Activated B cell treated with CpG ODN at 0.5 μM for 24 hours (primary cell): ENCODE measurements at regions of chr7 and their contacts with region 1.

Region 1: GRCh38 chr7:17234398-17235031 is 63.9 kb upstream of the AHR start:
- DNase-seq: peak; percentile 17
- ATAC-seq: peak; percentile 86
- H3K4me3 Mint-ChIP-seq: peak overlapping the region; percentile 77
- H3K27ac Mint-ChIP-seq: peak overlapping the region; percentile 98
- H3K4me1 Mint-ChIP-seq: peaks cover 29% of the 10 kb centered on the region
- H3K27me3 Mint-ChIP-seq: no peaks in the 10 kb centered on the region
- CTCF ChIP-seq: no peak

Region 2: DNA sequence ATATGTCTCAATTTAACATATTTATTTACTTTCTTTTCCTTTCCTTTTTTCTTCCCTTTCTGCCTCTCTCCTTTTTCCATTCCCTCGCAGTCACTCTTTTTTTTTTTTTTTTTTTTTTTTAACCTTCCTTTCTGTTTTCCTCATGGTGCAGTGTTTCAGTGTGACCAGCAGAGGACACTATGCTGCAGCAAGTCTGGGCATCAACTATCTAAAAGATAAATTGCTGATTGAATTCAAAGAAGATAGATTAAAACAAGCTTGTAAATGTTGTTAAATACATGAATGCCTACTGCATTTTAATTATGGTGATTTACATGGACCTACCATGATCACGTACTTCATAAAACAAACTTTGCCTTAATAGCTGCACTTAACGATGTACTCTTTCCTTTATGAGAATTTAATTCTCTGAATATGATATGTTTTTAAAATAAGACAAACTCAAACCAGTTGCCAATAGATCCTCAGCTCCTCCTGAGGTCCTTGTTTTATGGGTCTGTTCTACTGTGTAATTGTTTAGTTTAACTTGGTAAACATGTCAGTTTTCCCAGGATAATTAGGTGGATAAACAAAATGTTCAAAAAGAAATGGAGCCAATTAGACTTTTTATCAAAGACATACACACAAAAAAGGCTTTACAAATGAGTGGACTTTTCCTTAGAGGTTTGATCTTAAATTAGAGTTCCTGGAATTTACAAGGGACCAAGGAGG is 251.7 kb before region 1 on chr7:
- CTCF ChIA-PET with region 1: no interaction called
- POLR2A ChIA-PET with region 1: no interaction called
- intact Hi-C with region 1: loop called (anchors 1 kb)
- DNase-seq: no peak
- ATAC-seq: peak; percentile 64
- H3K4me3 Mint-ChIP-seq: peak overlapping the region; percentile 30
- H3K27ac Mint-ChIP-seq: peak overlapping the region; percentile 15
- H3K4me1 Mint-ChIP-seq: peaks cover 7% of the 10 kb centered on the region
- H3K27me3 Mint-ChIP-seq: peaks cover 2% of the 10 kb centered on the region
- CTCF ChIP-seq: peak; percentile 57

Region 3: DNA sequence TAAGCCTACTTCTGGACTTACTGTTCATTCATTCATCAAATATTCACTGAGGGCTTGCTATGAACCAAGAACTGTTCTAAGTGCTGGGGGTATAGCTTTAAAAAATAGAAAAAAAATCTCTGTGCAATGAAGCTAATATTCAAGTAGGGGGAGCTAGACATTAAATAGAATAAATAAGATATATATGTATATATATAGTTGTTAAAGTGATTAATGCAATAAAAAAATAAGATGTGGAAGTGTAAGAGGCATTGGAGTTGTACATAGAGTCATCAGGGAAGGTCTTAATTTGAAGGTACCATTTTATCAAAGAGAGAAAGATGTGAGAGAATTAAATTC is 171.5 kb before region 1 on chr7:
- CTCF ChIA-PET with region 1: no interaction called
- POLR2A ChIA-PET with region 1: no interaction called
- intact Hi-C with region 1: loop called (anchors 5 kb)
- DNase-seq: no peak
- ATAC-seq: no peak
- H3K4me3 Mint-ChIP-seq: no peak overlapping the region
- H3K27ac Mint-ChIP-seq: no peak overlapping the region
- H3K4me1 Mint-ChIP-seq: peaks cover 14% of the 10 kb centered on the region
- H3K27me3 Mint-ChIP-seq: no peaks in the 10 kb centered on the region
- CTCF ChIP-seq: no peak

Region 4: GRCh38 chr7:17185690-17186070 is 48.8 kb before region 1 on chr7:
- CTCF ChIA-PET with region 1: no interaction called
- POLR2A ChIA-PET with region 1: no interaction called
- intact Hi-C with region 1: loop called (anchors 1 kb)
- DNase-seq: no peak
- ATAC-seq: peak; percentile 97
- H3K4me3 Mint-ChIP-seq: no peak overlapping the region
- H3K27ac Mint-ChIP-seq: peak overlapping the region; percentile 67
- H3K4me1 Mint-ChIP-seq: peaks cover 16% of the 10 kb centered on the region
- H3K27me3 Mint-ChIP-seq: no peaks in the 10 kb centered on the region
- CTCF ChIP-seq: no peak

Region 5: DNA sequence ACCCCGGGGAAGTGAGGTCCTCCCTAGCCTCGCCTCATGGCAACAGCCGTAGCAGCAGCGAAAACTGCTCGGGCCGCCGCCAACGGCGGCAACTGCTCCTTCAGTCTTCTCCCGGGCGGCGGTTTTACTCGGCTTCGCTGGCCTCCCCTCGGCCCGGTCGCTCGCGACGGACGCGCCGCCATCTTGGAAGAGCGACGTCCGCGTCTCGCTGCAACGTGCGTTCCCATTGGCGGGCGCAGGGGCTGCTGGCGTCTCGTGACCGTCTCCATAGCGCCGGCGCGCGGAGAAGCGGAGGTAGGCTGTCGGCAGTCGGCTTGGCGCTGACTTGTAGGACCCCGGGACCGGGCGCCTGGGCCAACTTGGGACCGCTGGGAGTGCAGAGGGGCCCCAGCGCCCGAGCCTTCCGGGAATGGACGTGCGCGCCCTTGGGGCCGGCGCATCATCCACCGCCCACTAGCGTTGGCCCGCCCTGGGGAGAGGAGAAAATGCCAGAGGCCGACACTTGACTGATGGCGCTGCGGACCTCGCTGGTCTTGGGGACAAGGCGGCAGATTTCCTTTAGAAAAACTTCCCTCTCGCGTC is 705.9 kb after region 1 on chr7 and contains the start of gene SNX13:
- CTCF ChIA-PET with region 1: no interaction called
- POLR2A ChIA-PET with region 1: no interaction called
- intact Hi-C with region 1: loop called (anchors 5 kb)
- DNase-seq: peak; percentile 84
- ATAC-seq: peak; percentile 91
- H3K4me3 Mint-ChIP-seq: peak within 1 kb of the TSS; percentile 98
- H3K27ac Mint-ChIP-seq: peak within 1 kb of the TSS; percentile 98
- H3K4me1 Mint-ChIP-seq: peaks cover 44% of the 10 kb centered on the region
- H3K27me3 Mint-ChIP-seq: no peaks in the 10 kb centered on the region
- CTCF ChIP-seq: no peak
- total RNA-seq, gene SNX13: 40.0 and 46.5 TPM in 2 replicates